Naive thymus-derived CD4-positive, alpha-beta T cell (primary cell): ENCODE measurements at regions of chr2 and their contacts with region 1.

Region 1: GRCh38 chr2:12931186-12931844 is 214.6 kb downstream of the TRIB2 start:
- DNase-seq: peak in 4 of 9 donors; percentile 17 to 33 (median 26)
- ATAC-seq: peak; percentile 63
- H3K4me3 ChIP-seq: no peak overlapping the region
- H3K4me3 Mint-ChIP-seq: no peak overlapping the region
- H3K27ac ChIP-seq: no peak overlapping the region
- H3K27ac Mint-ChIP-seq: no peak overlapping the region
- H3K4me1 ChIP-seq: no peaks in the 10 kb centered on the region
- H3K4me1 Mint-ChIP-seq: peaks cover 0 to 12% (median 7%) of the 10 kb centered on the region in 7 donors
- H3K27me3 ChIP-seq: no peaks in the 10 kb centered on the region
- H3K27me3 Mint-ChIP-seq: peaks cover 0 to 50% (median 0%) of the 10 kb centered on the region in 5 donors

Region 2: GRCh38 chr2:11863513-11864328 is 1067.6 kb before region 1 on chr2:
- CTCF ChIA-PET with region 1: interaction called, 11 read pairs
- POLR2A ChIA-PET with region 1: no interaction called
- intact Hi-C with region 1: loop called (anchors 1 to 5 kb)
- DNase-seq: peak; percentile 38 to 71 (median 57)
- ATAC-seq: peak; percentile 88
- H3K4me3 ChIP-seq: peak overlapping the region; percentile 14
- H3K4me3 Mint-ChIP-seq: peak overlapping the region; percentile 28 to 71 (median 54)
- H3K27ac ChIP-seq: no peak overlapping the region
- H3K27ac Mint-ChIP-seq: peak overlapping the region in 2 of 9 donors; percentile 13 to 22
- H3K4me1 ChIP-seq: peaks cover 0 to 7% of the 10 kb centered on the region in 2 donors
- H3K4me1 Mint-ChIP-seq: peaks cover 8 to 14% (median 11%) of the 10 kb centered on the region in 7 donors
- H3K27me3 ChIP-seq: no peaks in the 10 kb centered on the region
- H3K27me3 Mint-ChIP-seq: peaks cover 0 to 28% (median 0%) of the 10 kb centered on the region in 5 donors

Region 3: DNA sequence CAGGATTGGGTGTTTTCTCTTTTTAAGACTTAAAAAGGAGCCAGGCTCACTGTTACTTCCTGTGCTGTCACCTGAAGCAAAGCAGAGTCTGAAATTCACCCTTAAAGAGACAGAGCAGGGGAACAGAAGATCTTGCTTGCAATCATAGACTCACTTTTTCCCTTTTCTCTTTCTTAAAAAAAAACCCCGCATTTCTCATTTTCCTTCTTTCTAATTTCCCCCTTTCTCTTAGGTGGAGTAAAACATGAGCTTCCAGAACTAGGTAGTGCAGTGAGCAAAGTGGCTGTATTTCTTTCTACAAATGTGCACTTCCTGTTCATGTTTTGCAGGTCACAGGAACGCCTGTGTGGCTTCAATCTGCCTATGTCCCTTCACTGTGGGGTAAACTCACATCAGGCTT is 803.7 kb before region 1 on chr2:
- CTCF ChIA-PET with region 1: interaction called, 9 read pairs
- POLR2A ChIA-PET with region 1: no interaction called
- intact Hi-C with region 1: loop called in 1 of 2 experiments (anchors 1 kb)
- DNase-seq: peak in 6 of 9 donors; percentile 40 to 63 (median 56)
- ATAC-seq: peak; percentile 80
- H3K4me3 ChIP-seq: peak overlapping the region; percentile 10
- H3K4me3 Mint-ChIP-seq: peak overlapping the region in 5 of 10 donors; percentile 34 to 90 (median 73)
- H3K27ac ChIP-seq: peak overlapping the region; percentile 63
- H3K27ac Mint-ChIP-seq: peak overlapping the region in 3 of 9 donors; percentile 84 to 95 (median 87)
- H3K4me1 ChIP-seq: peaks cover 22 to 61% of the 10 kb centered on the region in 2 donors
- H3K4me1 Mint-ChIP-seq: peaks cover 0 to 22% (median 0%) of the 10 kb centered on the region in 7 donors
- H3K27me3 ChIP-seq: no peaks in the 10 kb centered on the region
- H3K27me3 Mint-ChIP-seq: no peaks in the 10 kb centered on the region

Region 4: DNA sequence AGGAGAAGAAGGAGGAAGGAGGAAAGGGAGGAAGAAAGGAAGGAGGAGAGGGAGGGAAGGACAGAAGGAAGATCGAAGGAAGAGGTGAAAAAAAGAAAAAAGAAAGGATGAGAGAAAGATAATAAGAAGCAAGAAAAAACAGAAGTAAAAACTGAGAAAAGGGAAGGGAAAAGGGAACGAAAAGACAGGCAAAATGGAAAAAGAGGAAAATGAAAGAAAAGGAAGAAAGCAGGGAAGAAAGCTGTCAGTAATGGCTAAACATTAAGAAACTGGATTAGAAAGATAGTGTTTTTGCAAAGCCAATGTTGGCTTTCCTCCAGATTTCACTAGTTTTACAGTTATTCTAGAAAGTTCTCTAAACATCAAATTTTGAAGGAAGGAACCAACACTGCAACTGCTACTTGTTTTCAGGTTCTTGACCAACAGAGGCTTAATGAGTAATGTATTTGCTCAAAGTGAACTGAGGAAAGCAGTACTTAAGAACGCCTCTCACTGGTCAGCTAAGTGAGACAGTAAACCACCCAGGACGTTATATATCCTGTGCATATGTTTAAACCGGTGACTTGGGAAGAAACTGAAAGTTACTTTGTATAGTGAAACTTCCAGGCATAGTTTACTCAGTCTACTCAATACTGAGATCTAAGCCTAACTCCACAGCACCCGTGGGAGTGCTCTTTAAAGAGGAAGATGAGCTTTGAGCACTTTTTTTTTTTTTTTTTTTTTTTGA is 500.7 kb before region 1 on chr2:
- CTCF ChIA-PET with region 1: no interaction called
- POLR2A ChIA-PET with region 1: interaction called, 4 read pairs
- intact Hi-C with region 1: loop called in 1 of 2 experiments (anchors 1 kb)
- DNase-seq: peak in 6 of 9 donors; percentile 10 to 28 (median 20)
- ATAC-seq: peak; percentile 87
- H3K4me3 ChIP-seq: peak overlapping the region; percentile 47
- H3K4me3 Mint-ChIP-seq: peak overlapping the region; percentile 31 to 83 (median 77)
- H3K27ac ChIP-seq: peak overlapping the region; percentile 22
- H3K27ac Mint-ChIP-seq: peak overlapping the region; percentile 60 to 91 (median 82)
- H3K4me1 ChIP-seq: peaks cover 0 to 12% of the 10 kb centered on the region in 2 donors
- H3K4me1 Mint-ChIP-seq: peaks cover 25 to 70% (median 49%) of the 10 kb centered on the region in 7 donors
- H3K27me3 ChIP-seq: no peaks in the 10 kb centered on the region
- H3K27me3 Mint-ChIP-seq: no peaks in the 10 kb centered on the region

Region 5: DNA sequence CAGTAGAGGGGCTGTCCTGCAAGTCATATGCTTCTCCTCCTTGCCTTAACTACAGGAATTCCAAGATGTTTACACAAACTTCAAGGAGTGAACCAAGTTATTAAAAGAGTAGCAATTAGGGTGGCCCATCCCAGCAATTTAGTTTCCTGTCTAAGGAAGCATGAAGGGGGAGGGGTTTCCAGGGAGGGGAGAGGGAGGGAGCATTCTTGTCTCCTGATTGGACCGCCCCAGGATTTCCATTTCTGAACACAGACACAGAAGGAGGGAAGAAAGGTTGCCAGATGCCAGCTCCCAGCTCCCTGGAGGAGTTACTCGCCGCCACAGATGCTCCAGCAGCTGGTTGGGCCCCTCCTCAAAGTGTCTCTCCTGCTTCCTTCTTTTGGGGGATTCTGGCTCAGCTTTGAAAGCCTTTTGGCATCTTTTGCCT is 107.0 kb before region 1 on chr2:
- CTCF ChIA-PET with region 1: interaction called, 4 read pairs
- POLR2A ChIA-PET with region 1: no interaction called
- intact Hi-C with region 1: loop called in 1 of 2 experiments (anchors 5 kb)
- DNase-seq: no peak
- ATAC-seq: no peak
- H3K4me3 ChIP-seq: no peak overlapping the region
- H3K4me3 Mint-ChIP-seq: no peak overlapping the region
- H3K27ac ChIP-seq: no peak overlapping the region
- H3K27ac Mint-ChIP-seq: no peak overlapping the region
- H3K4me1 ChIP-seq: peaks cover 0 to 4% of the 10 kb centered on the region in 2 donors
- H3K4me1 Mint-ChIP-seq: peaks cover 0 to 21% (median 14%) of the 10 kb centered on the region in 7 donors
- H3K27me3 ChIP-seq: no peaks in the 10 kb centered on the region
- H3K27me3 Mint-ChIP-seq: peaks cover 0 to 23% (median 16%) of the 10 kb centered on the region in 5 donors